ENCODE measurements at regions of chr9 and their contacts with region 1.

Region 1: GRCh38 chr9:86486891-86487837 is 133.0 kb upstream of the TUT7 start:
- DNase-seq: peak in 1 of 2 experiments; percentile 54
- H3K4me3 ChIP-seq: no peak overlapping the region
- H3K27ac ChIP-seq: no peak overlapping the region
- H3K4me1 ChIP-seq: 0 out of 2 replicates have a peak, but pooled peaks cover 6% of the 10 kb centered on the region
- H3K27me3 ChIP-seq: no peaks in the 10 kb centered on the region
- CTCF ChIP-seq: peak; percentile 85

Region 2: DNA sequence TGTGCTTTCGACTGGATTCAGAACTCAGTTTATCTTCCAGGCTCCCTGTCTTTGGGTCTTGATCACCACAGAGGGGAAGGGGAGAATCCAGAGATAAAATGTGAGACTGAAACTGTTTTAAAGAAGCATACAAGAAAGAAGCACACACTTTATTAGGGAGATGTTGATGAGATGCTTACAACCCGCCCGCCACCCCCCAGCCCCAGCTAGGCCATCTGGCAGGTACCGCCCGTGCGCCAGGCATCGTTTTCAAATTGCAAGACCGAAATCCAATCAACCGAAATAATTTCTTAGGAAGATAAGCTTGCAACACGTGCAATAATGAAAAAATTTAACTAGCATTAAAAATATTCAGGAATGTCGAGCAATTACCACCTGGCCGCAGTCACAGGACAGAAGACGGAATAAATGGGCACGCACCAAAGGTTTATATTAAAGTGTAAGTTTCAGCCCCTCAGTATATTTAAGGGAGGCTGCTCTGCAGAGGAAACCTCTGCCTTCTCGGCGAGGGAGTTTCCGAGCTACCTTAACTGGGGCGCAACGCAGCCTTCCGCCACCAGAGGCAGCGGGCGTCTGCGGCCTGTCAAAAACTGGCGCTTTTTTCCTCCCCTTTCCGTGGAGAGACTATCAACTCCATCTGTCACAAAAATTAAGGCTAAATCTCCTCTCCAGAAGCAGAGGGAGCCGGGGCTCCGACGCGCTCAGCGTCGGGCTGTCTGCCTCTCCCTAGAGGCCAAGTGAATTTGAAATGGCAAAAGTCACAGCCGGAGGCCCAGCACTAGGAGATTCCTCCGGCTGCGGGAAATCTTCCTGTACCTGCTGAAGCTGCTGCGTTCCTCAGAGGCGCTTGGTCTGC is 461.1 kb after region 1 on chr9:
- CTCF ChIA-PET with region 1: no interaction called
- POLR2A ChIA-PET with region 1: no interaction called
- intact Hi-C with region 1: loop called (anchors 5 kb)
- DNase-seq: peak; percentile 57
- H3K4me3 ChIP-seq: peak overlapping the region; percentile 63
- H3K27ac ChIP-seq: no peak overlapping the region
- H3K4me1 ChIP-seq: 0 out of 2 replicates have a peak, but pooled peaks cover 4% of the 10 kb centered on the region
- H3K27me3 ChIP-seq: no peaks in the 10 kb centered on the region
- CTCF ChIP-seq: peak; percentile 77

Region 3: GRCh38 chr9:87259543-87260518 is 772.7 kb after region 1 on chr9:
- CTCF ChIA-PET with region 1: no interaction called
- POLR2A ChIA-PET with region 1: no interaction called
- intact Hi-C with region 1: loop called (anchors 5 kb)
- DNase-seq: no peak
- H3K4me3 ChIP-seq: no peak overlapping the region
- H3K27ac ChIP-seq: no peak overlapping the region
- H3K4me1 ChIP-seq: no peaks in the 10 kb centered on the region
- H3K27me3 ChIP-seq: no peaks in the 10 kb centered on the region
- CTCF ChIP-seq: no peak